IMR-90 (cell line): ENCODE measurements at regions of chr7 and their contacts with region 1.

Region 1: GRCh38 chr7:140175221-140176121 is 1.3 kb downstream of the KDM7A start:
- DNase-seq: peak; percentile 92
- ATAC-seq: peak; percentile 54
- H3K4me3 ChIP-seq: peak overlapping the region; percentile 55
- H3K27ac ChIP-seq: peak overlapping the region; percentile 83
- H3K4me1 ChIP-seq: no peaks in the 10 kb centered on the region
- H3K27me3 ChIP-seq: no peaks in the 10 kb centered on the region
- CTCF ChIP-seq: peak; percentile 87
- POLR2A ChIP-seq: peak; percentile 98
- RAD21 ChIP-seq: peak; percentile 72

Region 2: DNA sequence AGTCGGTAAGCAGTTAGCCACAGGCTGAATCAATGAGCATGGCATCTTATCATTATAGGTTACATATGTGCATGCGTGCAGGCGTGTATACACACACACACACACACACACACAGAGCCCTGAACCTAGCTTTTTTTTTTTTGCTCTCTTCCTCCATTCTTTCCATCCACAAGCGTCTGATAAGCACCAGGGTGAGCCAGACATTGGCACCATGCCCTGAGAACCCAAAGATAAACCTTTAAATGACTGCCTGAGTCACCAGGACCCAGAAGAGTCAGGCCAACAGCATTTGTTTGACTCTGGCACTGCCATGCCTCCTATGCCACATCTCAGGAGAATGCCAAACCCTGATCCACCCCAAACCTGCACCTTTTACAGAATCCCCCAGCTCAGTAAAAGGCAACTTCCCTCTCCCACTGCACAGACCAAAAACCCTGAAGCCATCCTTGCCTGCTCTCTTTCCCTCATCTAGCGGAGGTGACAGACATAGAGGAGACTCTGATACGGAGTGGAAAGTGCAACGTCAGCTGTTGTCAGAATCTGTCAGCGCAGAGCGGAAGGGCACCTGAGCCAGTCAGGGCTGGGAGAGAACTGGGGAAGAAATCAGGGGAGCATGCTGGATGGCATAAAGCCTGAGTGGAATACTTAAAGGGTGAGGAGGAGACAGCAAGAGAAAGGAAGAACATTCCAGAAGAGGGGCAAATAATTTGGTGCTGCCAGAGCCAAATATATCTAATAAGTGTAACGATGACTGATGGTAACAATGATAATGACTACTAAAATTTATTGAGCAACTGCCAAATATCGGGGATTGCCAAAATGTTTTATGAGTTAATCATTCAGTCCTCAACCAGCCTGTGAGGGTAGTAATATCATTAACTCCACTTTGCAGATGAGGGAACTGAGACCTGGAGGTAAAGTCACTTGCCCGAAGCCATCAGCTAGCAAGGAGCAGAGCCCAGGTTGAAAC is 115.9 kb before region 1 on chr7:
- CTCF ChIA-PET with region 1: no interaction called
- POLR2A ChIA-PET with region 1: no interaction called
- dilution Hi-C with region 1: no loop called
- in situ Hi-C with region 1: no loop called
- intact Hi-C with region 1: loop called (anchors 2 kb)
- DNase-seq: peak; percentile 95
- ATAC-seq: peak; percentile 51
- H3K4me3 ChIP-seq: no peak overlapping the region
- H3K27ac ChIP-seq: no peak overlapping the region
- H3K4me1 ChIP-seq: peaks cover 21% of the 10 kb centered on the region
- H3K27me3 ChIP-seq: no peaks in the 10 kb centered on the region
- CTCF ChIP-seq: no peak
- POLR2A ChIP-seq: no peak
- RAD21 ChIP-seq: peak; percentile 8; the same call in 1 of the 2 replicates

Region 3: DNA sequence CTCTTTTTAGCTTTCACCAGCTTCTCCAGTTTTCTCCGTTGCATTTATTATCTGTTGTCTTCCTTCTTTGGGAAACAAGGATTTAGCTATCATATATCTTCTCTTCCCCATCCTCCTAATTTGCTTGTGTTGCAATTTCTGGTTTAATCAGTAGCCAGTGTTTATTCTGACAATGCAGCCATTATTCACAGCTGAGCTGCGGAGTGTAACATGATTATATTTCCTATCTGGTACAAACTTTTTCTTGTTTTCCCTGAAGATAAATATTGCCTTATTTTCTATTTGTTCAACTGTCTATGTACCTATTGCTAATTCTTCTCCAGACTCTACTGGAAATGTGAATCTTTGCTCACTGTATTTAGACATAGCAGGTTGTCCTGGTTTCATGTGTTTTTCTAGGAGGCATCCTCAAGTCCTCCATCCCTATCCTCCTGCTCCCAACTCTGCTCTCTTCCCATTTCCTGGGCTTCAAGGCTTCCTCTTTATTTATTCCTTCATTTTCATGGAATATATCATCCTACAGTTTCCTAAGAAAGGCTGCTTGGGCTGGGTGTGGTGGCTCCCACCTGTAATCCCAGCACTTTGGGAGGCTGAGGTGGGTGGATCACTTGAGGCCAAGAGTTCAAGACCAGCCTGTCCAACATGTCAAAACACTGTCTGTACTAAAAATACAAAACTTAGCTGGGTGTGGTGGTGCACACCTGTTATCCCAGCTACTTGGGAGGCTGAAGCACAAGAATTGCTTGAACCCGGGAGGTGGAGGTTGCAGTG is 73.8 kb after region 1 on chr7:
- CTCF ChIA-PET with region 1: interaction called, 3 read pairs
- POLR2A ChIA-PET with region 1: no interaction called
- dilution Hi-C with region 1: no loop called
- in situ Hi-C with region 1: no loop called
- intact Hi-C with region 1: loop called (anchors 2 kb)
- DNase-seq: no peak
- ATAC-seq: no peak
- H3K4me3 ChIP-seq: no peak overlapping the region
- H3K27ac ChIP-seq: no peak overlapping the region
- H3K4me1 ChIP-seq: peaks cover 2% of the 10 kb centered on the region; the same call in 1 of the 2 replicates
- H3K27me3 ChIP-seq: peaks cover 9% of the 10 kb centered on the region
- CTCF ChIP-seq: no peak
- POLR2A ChIP-seq: no peak
- RAD21 ChIP-seq: no peak

Region 4: GRCh38 chr7:140304191-140304799 is 128.8 kb after region 1 on chr7:
- CTCF ChIA-PET with region 1: no interaction called
- POLR2A ChIA-PET with region 1: no interaction called
- dilution Hi-C with region 1: no loop called
- in situ Hi-C with region 1: no loop called
- intact Hi-C with region 1: loop called (anchors 1 kb)
- DNase-seq: peak; percentile 16
- ATAC-seq: peak; percentile 60; the same call in 1 of the 2 replicates
- H3K4me3 ChIP-seq: no peak overlapping the region
- H3K27ac ChIP-seq: no peak overlapping the region
- H3K4me1 ChIP-seq: no peaks in the 10 kb centered on the region
- H3K27me3 ChIP-seq: peaks cover 12% of the 10 kb centered on the region
- CTCF ChIP-seq: peak; percentile 36; the same call in 1 of the 2 replicates
- POLR2A ChIP-seq: no peak
- RAD21 ChIP-seq: peak; percentile 33; the same call in 1 of the 2 replicates

Region 5: GRCh38 chr7:140326116-140326928 is 150.9 kb after region 1 on chr7:
- CTCF ChIA-PET with region 1: interaction called, 3 read pairs
- POLR2A ChIA-PET with region 1: no interaction called
- dilution Hi-C with region 1: no loop called
- in situ Hi-C with region 1: loop called (anchors 10 kb)
- intact Hi-C with region 1: loop called (anchors 1 kb)
- DNase-seq: peak; percentile 73
- ATAC-seq: peak; percentile 99
- H3K4me3 ChIP-seq: no peak overlapping the region
- H3K27ac ChIP-seq: no peak overlapping the region
- H3K4me1 ChIP-seq: no peaks in the 10 kb centered on the region
- H3K27me3 ChIP-seq: no peaks in the 10 kb centered on the region
- CTCF ChIP-seq: peak; percentile 92
- POLR2A ChIP-seq: peak; percentile 46; the same call in 1 of the 2 replicates
- RAD21 ChIP-seq: peak; percentile 92

Region 6: GRCh38 chr7:140342727-140343514 is 167.4 kb after region 1 on chr7:
- CTCF ChIA-PET with region 1: no interaction called
- POLR2A ChIA-PET with region 1: no interaction called
- dilution Hi-C with region 1: no loop called
- in situ Hi-C with region 1: no loop called
- intact Hi-C with region 1: loop called (anchors 5 kb)
- DNase-seq: peak; percentile 63
- ATAC-seq: peak; percentile 66
- H3K4me3 ChIP-seq: no peak overlapping the region
- H3K27ac ChIP-seq: no peak overlapping the region
- H3K4me1 ChIP-seq: 0 out of 2 replicates have a peak, but pooled peaks cover 2% of the 10 kb centered on the region
- H3K27me3 ChIP-seq: no peaks in the 10 kb centered on the region
- CTCF ChIP-seq: peak; percentile 40
- POLR2A ChIP-seq: no peak
- RAD21 ChIP-seq: peak; percentile 53